ENCODE measurements at regions of chr7 and their contacts with region 1.

Region 1: DNA sequence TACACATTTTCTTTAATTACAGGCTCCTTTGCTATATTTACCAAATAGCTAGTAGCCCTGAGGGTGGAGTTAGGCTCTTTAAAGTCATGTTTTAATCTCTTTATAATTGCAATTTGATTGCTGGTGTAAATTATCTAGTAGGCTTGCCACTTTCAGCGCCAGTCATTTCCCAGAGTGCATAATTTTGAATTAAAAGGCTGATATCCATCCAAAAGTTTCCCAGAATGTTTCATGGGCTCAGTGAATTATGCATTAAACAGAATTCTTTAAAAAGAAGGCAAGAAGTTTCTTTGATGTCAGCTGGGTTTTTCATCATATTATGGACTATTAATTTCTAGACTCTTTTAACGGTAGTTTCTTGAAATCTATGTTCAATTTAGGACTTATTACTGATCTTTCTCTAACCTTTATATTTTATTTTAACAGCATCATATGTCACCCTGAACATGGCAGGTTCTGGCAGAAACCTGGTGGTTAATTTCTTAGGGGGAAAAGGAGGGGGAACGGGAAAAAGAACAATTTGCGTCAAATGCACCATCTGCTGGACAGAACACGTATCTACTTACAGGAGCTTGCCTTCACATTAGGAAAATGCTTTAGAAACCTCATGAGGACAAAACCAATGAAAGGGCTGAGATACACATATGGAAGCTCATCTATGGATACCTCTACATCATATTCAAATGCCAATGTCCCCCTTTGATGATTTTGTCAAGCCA is 171.1 kb downstream of the GRM3 start:
- DNase-seq: peak; percentile 12
- ATAC-seq: no peak
- H3K4me3 ChIP-seq: no peak overlapping the region
- H3K27ac ChIP-seq: no peak overlapping the region
- H3K4me1 ChIP-seq: no peaks in the 10 kb centered on the region
- H3K27me3 ChIP-seq: no peaks in the 10 kb centered on the region
- CTCF ChIP-seq: peak; percentile 54; the same call in 1 of the 2 replicates

Region 2: DNA sequence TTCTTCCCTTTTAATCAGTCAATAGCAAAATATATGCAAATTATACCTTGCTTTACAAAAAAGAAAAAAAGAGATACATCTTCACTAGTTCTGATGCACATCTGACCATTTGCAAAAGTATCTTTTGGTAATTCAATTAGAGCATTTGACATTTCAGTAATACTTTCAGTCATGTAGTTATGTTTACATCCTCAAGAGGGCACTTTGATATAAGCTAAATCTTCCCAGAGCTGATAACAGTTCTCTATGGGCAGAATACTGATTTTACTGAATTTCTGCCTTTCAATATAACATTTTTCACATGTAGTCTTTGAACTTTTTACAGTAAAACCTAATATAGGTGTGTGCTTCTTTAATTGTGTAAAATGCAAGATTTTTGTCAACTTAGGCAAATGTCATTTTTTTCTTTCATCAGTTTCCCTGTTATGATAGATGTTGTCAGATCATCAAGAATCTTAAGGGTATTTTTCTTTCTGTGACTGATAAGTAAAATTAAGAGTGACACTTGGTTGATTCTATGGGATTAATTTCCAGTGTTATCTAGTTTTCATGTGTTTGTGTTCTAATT is 924.5 kb before region 1 on chr7:
- CTCF ChIA-PET with region 1: no interaction called
- POLR2A ChIA-PET with region 1: no interaction called
- in situ Hi-C with region 1: no loop called
- intact Hi-C with region 1: loop called (anchors 10 kb)
- DNase-seq: peak; percentile 12
- ATAC-seq: peak; percentile 69; the same call in 1 of the 2 replicates
- H3K4me3 ChIP-seq: no peak overlapping the region
- H3K27ac ChIP-seq: no peak overlapping the region
- H3K4me1 ChIP-seq: no peaks in the 10 kb centered on the region
- H3K27me3 ChIP-seq: no peaks in the 10 kb centered on the region
- CTCF ChIP-seq: peak; percentile 56; the same call in 1 of the 2 replicates

Region 3: GRCh38 chr7:86499986-86500385 is 314.8 kb before region 1 on chr7:
- CTCF ChIA-PET with region 1: no interaction called
- POLR2A ChIA-PET with region 1: no interaction called
- in situ Hi-C with region 1: no loop called
- intact Hi-C with region 1: loop called (anchors 5 kb)
- DNase-seq: no peak
- ATAC-seq: no peak
- H3K4me3 ChIP-seq: no peak overlapping the region
- H3K27ac ChIP-seq: no peak overlapping the region
- H3K4me1 ChIP-seq: no peaks in the 10 kb centered on the region
- H3K27me3 ChIP-seq: no peaks in the 10 kb centered on the region
- CTCF ChIP-seq: no peak

Region 4: GRCh38 chr7:86600506-86601290 is 214.1 kb before region 1 on chr7:
- CTCF ChIA-PET with region 1: no interaction called
- POLR2A ChIA-PET with region 1: no interaction called
- in situ Hi-C with region 1: no loop called
- intact Hi-C with region 1: loop called (anchors 10 kb)
- DNase-seq: no peak
- ATAC-seq: no peak
- H3K4me3 ChIP-seq: no peak overlapping the region
- H3K27ac ChIP-seq: no peak overlapping the region
- H3K4me1 ChIP-seq: no peaks in the 10 kb centered on the region
- H3K27me3 ChIP-seq: no peaks in the 10 kb centered on the region
- CTCF ChIP-seq: no peak

Region 5: DNA sequence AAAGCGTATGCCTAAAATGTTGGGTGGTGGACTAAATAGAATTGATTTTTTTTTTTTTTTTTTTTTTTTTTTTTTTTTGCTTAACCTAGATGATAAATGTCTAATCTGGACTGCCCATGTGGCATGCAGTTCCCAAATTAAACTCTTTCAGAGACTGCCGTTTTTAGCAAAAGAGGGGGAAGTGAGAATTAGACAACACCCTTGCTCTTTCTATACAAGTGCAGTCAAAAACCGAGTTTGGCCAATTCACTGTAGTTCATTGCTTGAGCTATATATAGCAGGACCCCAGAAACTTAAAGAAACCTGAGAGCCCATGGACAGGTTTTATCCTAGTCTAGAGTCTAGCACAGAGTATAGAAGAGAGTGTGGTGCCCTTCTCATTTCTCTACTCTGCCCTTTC is 29.2 kb before region 1 on chr7:
- CTCF ChIA-PET with region 1: no interaction called
- POLR2A ChIA-PET with region 1: no interaction called
- in situ Hi-C with region 1: no loop called
- intact Hi-C with region 1: no loop called
- DNase-seq: no peak
- ATAC-seq: no peak
- H3K4me3 ChIP-seq: no peak overlapping the region
- H3K27ac ChIP-seq: no peak overlapping the region
- H3K4me1 ChIP-seq: no peaks in the 10 kb centered on the region
- H3K27me3 ChIP-seq: no peaks in the 10 kb centered on the region
- CTCF ChIP-seq: no peak